ENCODE measurements at regions of chr12 and their contacts with region 1.

Region 1: DNA sequence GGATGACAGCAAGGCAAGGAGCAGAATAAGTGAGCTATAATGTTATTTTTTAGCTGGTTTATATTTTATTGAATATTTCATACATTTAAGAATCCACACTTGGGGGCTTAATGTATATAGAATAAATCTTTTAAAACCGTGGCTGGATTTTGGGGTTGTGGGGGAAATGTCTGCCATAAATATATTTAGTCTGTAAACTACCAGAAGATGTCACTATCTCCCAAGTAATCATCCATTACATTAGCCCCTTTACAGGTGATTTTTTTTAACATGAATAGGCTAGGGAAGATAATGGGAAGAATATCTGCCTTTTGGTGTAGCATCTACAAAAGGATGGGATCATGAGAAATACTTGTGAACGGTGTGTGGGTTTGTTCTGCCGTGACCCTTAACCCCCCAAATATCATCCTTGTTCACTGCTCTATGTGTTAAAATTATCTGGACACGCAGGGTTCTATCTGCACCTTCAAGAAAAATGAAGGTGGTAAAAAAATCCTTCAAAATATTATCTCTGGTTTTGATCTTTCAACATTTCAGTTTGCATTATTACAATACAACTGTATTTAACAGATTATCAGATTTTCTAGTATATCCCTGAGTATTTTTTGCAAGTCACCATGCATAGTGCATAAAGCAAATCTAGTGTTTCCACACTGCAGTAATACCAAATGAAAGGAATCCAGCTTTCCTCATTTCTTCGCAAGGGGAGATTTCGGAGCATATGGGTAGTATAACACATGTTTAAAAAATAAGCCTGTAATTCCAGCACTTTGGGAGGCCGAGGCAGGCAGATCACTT is 8.0 kb upstream of the SLC17A8 start:
- DNase-seq: peak; percentile 37
- H3K4me3 ChIP-seq: no peak overlapping the region
- H3K27ac ChIP-seq: no peak overlapping the region
- H3K4me1 ChIP-seq: no peaks in the 10 kb centered on the region
- H3K27me3 ChIP-seq: peaks cover 0 to 2% of the 10 kb centered on the region in 2 experiments
- CTCF ChIP-seq: no peak
- POLR2A ChIP-seq: no peak

Region 2: GRCh38 chr12:100020370-100020769 is 328.5 kb before region 1 on chr12:
- CTCF ChIA-PET with region 1: no interaction called
- POLR2A ChIA-PET with region 1: no interaction called
- dilution Hi-C with region 1: no loop called
- intact Hi-C with region 1: no loop called
- DNase-seq: no peak
- H3K4me3 ChIP-seq: no peak overlapping the region
- H3K27ac ChIP-seq: no peak overlapping the region
- H3K4me1 ChIP-seq: peaks cover 3% of the 10 kb centered on the region
- H3K27me3 ChIP-seq: no peaks in the 10 kb centered on the region
- CTCF ChIP-seq: no peak
- POLR2A ChIP-seq: no peak

Region 3: DNA sequence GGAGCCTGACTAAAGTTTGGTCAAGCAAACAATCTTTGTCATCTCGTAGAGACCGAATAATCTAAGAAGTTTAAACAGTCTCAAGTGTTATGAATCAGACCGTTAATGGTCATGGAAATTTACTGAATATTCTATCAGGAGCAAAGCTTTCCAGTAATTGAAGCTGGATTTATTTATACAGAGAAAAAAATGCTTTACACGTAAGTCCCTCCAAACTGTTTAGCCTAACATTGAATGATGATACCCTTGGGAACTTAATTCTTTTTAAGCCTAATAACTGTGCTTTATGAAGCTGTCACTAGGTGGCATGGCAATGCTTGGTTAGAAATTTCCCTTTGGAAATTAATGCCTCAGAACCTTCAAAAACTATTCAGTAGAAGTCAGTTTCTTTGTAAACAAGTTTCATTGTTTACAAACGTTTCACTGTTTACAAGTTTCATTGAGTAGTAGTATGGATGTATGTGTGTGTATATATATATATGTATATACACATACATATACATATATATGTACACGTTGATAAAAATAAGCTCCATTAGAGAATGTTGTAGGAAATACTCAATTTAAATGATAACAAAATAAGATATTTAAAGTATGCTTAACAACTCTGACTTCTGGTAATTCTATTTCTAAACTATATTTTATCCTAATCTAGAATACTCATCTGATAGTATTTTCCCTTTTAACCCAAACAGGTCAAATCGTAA is 114.1 kb before region 1 on chr12:
- CTCF ChIA-PET with region 1: interaction called, 22 read pairs
- POLR2A ChIA-PET with region 1: no interaction called
- dilution Hi-C with region 1: no loop called
- intact Hi-C with region 1: no loop called
- DNase-seq: peak; percentile 58
- H3K4me3 ChIP-seq: no peak overlapping the region
- H3K27ac ChIP-seq: no peak overlapping the region
- H3K4me1 ChIP-seq: no peaks in the 10 kb centered on the region
- H3K27me3 ChIP-seq: no peaks in the 10 kb centered on the region
- CTCF ChIP-seq: peak; percentile 52 to 53
- POLR2A ChIP-seq: no peak

Region 4: GRCh38 chr12:100337727-100338126 is 11.1 kb before region 1 on chr12:
- CTCF ChIA-PET with region 1: interaction called, 12 read pairs
- POLR2A ChIA-PET with region 1: interaction called, 3 read pairs
- dilution Hi-C with region 1: no loop called
- intact Hi-C with region 1: no loop called
- DNase-seq: no peak
- H3K4me3 ChIP-seq: no peak overlapping the region
- H3K27ac ChIP-seq: no peak overlapping the region
- H3K4me1 ChIP-seq: no peaks in the 10 kb centered on the region
- H3K27me3 ChIP-seq: no peaks in the 10 kb centered on the region
- CTCF ChIP-seq: no peak
- POLR2A ChIP-seq: no peak

Region 5: GRCh38 chr12:100733817-100734593 is 385.1 kb after region 1 on chr12:
- CTCF ChIA-PET with region 1: interaction called, 10 read pairs
- POLR2A ChIA-PET with region 1: no interaction called
- dilution Hi-C with region 1: no loop called
- intact Hi-C with region 1: no loop called
- DNase-seq: peak; percentile 32
- H3K4me3 ChIP-seq: no peak overlapping the region
- H3K27ac ChIP-seq: no peak overlapping the region
- H3K4me1 ChIP-seq: no peaks in the 10 kb centered on the region
- H3K27me3 ChIP-seq: no peaks in the 10 kb centered on the region
- CTCF ChIP-seq: peak; percentile 31 to 48
- POLR2A ChIP-seq: no peak

Region 6: DNA sequence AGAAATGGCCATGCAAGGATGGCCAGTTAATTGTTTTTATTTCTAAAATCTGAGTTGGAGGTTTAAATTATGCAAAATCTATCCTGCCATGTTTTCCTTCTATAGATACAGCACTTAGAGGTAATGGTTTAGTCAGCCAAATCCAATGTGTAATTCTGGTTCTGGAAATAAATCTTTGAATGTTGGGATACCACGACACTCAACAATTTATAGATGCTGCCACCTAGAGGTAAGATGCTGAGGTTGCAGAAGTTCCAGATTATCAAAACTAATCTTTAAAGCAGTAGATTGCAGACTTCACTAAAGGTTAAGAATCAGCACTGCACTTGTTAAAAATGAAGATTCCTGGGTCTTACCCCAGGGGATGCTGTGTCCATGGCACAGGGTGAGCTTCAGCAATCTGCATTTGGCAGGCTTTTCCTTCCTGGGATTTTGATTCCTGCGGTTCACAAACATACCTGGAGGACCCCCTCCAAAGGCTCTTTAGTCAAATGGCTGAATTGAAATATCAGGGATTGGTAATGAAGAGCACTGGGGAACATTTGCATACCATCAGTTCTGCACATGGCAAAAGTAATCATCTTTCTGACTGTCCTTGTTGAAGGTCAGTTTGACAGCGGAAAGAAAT is 392.3 kb after region 1 on chr12:
- CTCF ChIA-PET with region 1: interaction called, 20 read pairs
- POLR2A ChIA-PET with region 1: no interaction called
- dilution Hi-C with region 1: no loop called
- intact Hi-C with region 1: loop called (anchors 1 kb)
- DNase-seq: peak; percentile 44
- H3K4me3 ChIP-seq: no peak overlapping the region
- H3K27ac ChIP-seq: no peak overlapping the region
- H3K4me1 ChIP-seq: no peaks in the 10 kb centered on the region
- H3K27me3 ChIP-seq: no peaks in the 10 kb centered on the region
- CTCF ChIP-seq: peak; percentile 52 to 60
- POLR2A ChIP-seq: no peak

Measured in endothelial cell of umbilical vein (primary cell).